CD4-positive, alpha-beta memory T cell (primary cell): ENCODE measurements at regions of chr10 and their contacts with region 1.

Region 1: DNA sequence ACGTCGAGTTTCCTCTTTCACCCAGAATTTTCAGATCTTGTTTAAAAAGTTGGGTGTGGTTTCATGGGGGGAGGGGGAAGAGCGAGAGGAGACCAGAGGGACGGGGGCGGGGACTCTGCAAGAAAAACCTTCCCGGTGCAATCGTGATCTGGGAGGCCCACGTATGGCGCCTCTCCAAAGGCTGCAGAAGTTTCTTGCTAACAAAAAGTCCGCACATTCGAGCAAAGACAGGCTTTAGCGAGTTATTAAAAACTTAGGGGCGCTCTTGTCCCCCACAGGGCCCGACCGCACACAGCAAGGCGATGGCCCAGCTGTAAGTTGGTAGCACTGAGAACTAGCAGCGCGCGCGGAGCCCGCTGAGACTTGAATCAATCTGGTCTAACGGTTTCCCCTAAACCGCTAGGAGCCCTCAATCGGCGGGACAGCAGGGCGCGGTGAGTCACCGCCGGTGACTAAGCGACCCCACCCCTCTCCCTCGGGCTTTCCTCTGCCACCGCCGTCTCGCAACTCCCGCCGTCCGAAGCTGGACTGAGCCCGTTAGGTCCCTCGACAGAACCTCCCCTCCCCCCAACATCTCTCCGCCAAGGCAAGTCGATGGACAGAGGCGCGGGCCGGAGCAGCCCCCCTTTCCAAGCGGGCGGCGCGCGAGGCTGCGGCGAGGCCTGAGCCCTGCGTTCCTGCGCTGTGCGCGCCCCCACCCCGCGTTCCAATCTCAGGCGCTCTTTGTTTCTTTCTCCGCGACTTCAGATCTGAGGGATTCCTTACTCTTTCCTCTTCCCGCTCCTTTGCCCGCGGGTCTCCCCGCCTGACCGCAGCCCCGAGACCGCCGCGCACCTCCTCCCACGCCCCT is at the start of gene VIM:
- DNase-seq: peak; percentile 79 to 95 (median 80)
- H3K4me3 ChIP-seq: peak within 1 kb of the TSS; percentile 82 to 91
- H3K4me3 Mint-ChIP-seq: peak within 1 kb of the TSS; percentile 88 to 99 (median 98)
- H3K27ac ChIP-seq: peak within 1 kb of the TSS; percentile 98
- H3K27ac Mint-ChIP-seq: peak within 1 kb of the TSS; percentile 96 to 100 (median 99)
- H3K4me1 ChIP-seq: peaks cover 48% of the 10 kb centered on the region
- H3K4me1 Mint-ChIP-seq: peaks cover 28 to 83% (median 52%) of the 10 kb centered on the region in 4 donors
- H3K27me3 ChIP-seq: no peaks in the 10 kb centered on the region
- H3K27me3 Mint-ChIP-seq: no peaks in the 10 kb centered on the region
- total RNA-seq, gene VIM: 657 to 677 TPM

Region 2: DNA sequence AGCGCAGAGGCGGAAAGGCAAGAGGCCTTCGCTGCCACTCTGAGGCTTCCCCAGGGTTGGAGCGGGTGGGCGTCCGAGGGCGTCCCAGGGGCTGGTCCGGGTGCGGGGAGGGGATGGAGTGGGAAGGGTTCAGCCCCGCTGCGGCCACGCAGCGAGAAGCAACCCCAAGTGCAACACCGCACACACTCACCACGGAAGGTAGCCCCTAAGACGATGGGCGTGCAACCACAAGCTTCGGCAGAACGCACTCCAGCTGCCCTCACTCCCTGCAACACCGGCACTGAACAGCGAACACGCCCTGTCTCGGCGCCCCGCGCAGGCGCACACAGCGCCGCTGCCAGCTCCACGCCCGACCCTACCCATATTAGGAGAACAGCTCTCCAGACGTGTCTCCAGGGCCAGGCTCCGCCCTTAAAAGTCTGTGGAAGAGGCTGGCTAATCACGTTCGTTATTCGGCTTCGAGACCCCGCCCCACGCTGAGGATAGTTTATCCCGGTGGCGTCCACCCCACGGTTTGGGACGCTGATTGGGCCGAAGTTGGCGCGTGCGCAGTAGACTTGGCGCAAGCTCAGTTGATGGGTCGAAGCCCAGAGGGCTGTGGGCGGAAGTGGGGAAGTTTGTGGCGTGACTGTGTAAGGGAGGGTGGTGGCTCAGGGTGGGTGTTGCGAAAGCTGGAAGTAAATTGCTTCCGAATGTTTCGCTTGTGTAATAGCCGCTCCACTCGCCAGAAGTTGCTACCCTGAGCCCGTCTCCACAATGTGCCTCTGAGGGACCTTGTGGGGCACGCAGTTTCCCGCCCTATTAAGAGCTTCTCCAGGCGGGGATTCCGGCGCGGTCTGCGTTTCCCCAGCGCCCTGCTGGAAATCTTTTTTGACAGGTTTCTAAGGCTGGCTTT is 410.9 kb before region 1 on chr10 and contains the start of gene RSU1:
- CTCF ChIA-PET with region 1: interaction called, 6 read pairs
- POLR2A ChIA-PET with region 1: interaction called, 101 read pairs
- intact Hi-C with region 1: loop called (anchors 1 kb)
- DNase-seq: peak; percentile 100
- H3K4me3 ChIP-seq: peak within 1 kb of the TSS; percentile 58 to 70
- H3K4me3 Mint-ChIP-seq: peak within 1 kb of the TSS; percentile 95 to 99 (median 97)
- H3K27ac ChIP-seq: peak within 1 kb of the TSS; percentile 78
- H3K27ac Mint-ChIP-seq: peak within 1 kb of the TSS; percentile 88 to 98 (median 96)
- H3K4me1 ChIP-seq: peaks cover 37% of the 10 kb centered on the region
- H3K4me1 Mint-ChIP-seq: peaks cover 24 to 55% (median 35%) of the 10 kb centered on the region in 4 donors
- H3K27me3 ChIP-seq: no peaks in the 10 kb centered on the region
- H3K27me3 Mint-ChIP-seq: no peaks in the 10 kb centered on the region
- total RNA-seq, gene RSU1: 53.6 to 54.7 TPM

Region 3: GRCh38 chr10:16891375-16892313 is 336.7 kb before region 1 on chr10:
- CTCF ChIA-PET with region 1: no interaction called
- POLR2A ChIA-PET with region 1: no interaction called
- intact Hi-C with region 1: loop called (anchors 1 kb)
- DNase-seq: peak; percentile 20 to 47 (median 37)
- H3K4me3 ChIP-seq: peak overlapping the region in 1 of 2 donors; percentile 11
- H3K4me3 Mint-ChIP-seq: peak overlapping the region; percentile 64 to 84 (median 78)
- H3K27ac ChIP-seq: no peak overlapping the region
- H3K27ac Mint-ChIP-seq: peak overlapping the region in 6 of 7 donors; percentile 18 to 86 (median 61)
- H3K4me1 ChIP-seq: peaks cover 10% of the 10 kb centered on the region
- H3K4me1 Mint-ChIP-seq: peaks cover 6 to 13% (median 9%) of the 10 kb centered on the region in 4 donors
- H3K27me3 ChIP-seq: no peaks in the 10 kb centered on the region
- H3K27me3 Mint-ChIP-seq: no peaks in the 10 kb centered on the region

Region 4: GRCh38 chr10:17029581-17030271 is 198.6 kb before region 1 on chr10:
- CTCF ChIA-PET with region 1: interaction called, 4 read pairs
- POLR2A ChIA-PET with region 1: interaction called, 98 read pairs
- intact Hi-C with region 1: loop called (anchors 1 kb)
- DNase-seq: peak; percentile 65 to 90 (median 68)
- H3K4me3 ChIP-seq: peak overlapping the region in 1 of 2 donors; percentile 51
- H3K4me3 Mint-ChIP-seq: peak overlapping the region; percentile 81 to 86 (median 84)
- H3K27ac ChIP-seq: peak overlapping the region; percentile 90
- H3K27ac Mint-ChIP-seq: peak overlapping the region; percentile 95 to 97 (median 97)
- H3K4me1 ChIP-seq: peaks cover 90% of the 10 kb centered on the region
- H3K4me1 Mint-ChIP-seq: peaks cover 55 to 94% (median 77%) of the 10 kb centered on the region in 4 donors
- H3K27me3 ChIP-seq: no peaks in the 10 kb centered on the region
- H3K27me3 Mint-ChIP-seq: no peaks in the 10 kb centered on the region

Region 5: DNA sequence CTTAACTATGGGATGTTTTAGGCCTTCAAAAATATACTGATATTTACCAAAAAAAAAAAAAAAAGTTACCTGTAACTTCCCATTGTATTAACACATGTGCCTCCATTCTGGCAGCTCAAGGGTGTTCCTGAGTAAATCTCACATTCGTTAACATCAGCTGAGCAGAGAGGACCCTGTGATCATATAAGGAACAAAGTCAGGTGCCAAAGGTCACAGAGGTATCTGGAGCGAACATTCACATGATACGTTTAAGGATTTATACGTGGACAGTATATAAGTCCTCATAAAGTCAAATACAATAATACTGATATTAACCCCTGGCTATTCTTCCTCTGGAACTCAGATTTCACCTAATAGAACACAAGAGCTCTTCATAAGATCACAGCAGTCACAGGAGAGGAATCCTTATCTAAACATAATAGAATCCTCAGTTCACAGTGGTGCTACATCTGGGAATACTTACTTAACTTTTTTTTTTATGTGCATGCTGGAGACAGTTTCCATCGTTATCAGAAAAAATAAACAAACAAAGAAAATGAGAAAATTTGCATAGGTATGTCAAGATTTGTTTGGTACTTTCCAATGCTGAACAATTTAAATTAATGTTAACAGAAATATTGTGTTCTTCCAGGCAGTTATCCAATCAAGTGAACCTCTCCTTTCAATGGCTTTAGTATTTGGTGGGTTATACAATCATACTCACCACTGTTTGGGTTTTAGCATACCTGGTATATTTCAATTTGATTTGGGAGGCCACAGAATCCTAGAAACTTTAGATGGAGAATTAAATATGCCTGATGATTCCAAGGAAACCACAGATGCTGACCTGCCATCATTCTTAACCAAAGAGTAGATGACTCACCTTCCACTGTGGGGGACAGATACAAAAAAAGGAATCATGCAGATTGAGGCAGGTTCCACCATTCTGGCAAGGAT is 105.3 kb before region 1 on chr10:
- CTCF ChIA-PET with region 1: no interaction called
- POLR2A ChIA-PET with region 1: no interaction called
- intact Hi-C with region 1: no loop called
- DNase-seq: no peak
- H3K4me3 ChIP-seq: no peak overlapping the region
- H3K4me3 Mint-ChIP-seq: no peak overlapping the region
- H3K27ac ChIP-seq: no peak overlapping the region
- H3K27ac Mint-ChIP-seq: no peak overlapping the region
- H3K4me1 ChIP-seq: no peaks in the 10 kb centered on the region
- H3K4me1 Mint-ChIP-seq: peaks cover 0 to 3% (median 0%) of the 10 kb centered on the region in 4 donors
- H3K27me3 ChIP-seq: no peaks in the 10 kb centered on the region
- H3K27me3 Mint-ChIP-seq: no peaks in the 10 kb centered on the region

Region 6: DNA sequence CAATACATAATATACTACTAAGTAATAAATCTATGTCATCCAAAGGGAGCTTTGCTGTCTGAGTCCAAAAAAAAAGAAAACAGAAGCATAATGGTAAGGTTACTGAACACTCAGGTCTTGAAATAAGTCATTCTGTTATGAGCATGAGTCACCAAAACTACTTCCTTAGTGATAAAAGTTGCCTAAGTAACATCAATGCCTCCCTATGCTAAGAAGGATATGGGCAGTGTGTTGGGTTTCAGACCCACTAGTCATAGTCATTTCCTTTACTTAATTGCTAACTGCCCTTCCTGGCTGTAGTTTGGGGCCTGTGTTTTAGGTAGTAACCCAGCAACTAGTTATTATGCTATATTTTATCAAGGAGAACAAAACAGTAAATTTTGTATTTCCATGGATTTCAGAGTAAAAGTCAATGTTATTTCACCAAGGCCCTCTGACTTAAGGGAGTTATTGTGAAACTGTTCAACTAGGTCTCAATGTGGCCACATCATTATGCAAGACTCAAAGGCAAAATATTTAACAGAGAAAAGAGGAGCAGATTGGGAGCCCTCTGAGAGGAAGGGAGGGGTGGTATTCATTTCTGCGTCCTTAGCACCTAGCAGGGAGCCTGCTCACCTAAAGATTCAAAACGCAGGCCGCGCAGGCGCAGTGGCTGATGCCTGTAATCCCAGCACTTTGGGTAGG is 12.0 kb before region 1 on chr10:
- CTCF ChIA-PET with region 1: interaction called, 11 read pairs
- POLR2A ChIA-PET with region 1: interaction called, 41 read pairs
- intact Hi-C with region 1: loop called (anchors 1 kb)
- DNase-seq: peak in 4 of 5 donors; percentile 36 to 72 (median 47)
- H3K4me3 ChIP-seq: no peak overlapping the region
- H3K4me3 Mint-ChIP-seq: no peak overlapping the region
- H3K27ac ChIP-seq: peak overlapping the region; percentile 56
- H3K27ac Mint-ChIP-seq: peak overlapping the region; percentile 78 to 93 (median 87)
- H3K4me1 ChIP-seq: peaks cover 17% of the 10 kb centered on the region
- H3K4me1 Mint-ChIP-seq: peaks cover 8 to 39% (median 11%) of the 10 kb centered on the region in 4 donors
- H3K27me3 ChIP-seq: no peaks in the 10 kb centered on the region
- H3K27me3 Mint-ChIP-seq: no peaks in the 10 kb centered on the region

Region 7: DNA sequence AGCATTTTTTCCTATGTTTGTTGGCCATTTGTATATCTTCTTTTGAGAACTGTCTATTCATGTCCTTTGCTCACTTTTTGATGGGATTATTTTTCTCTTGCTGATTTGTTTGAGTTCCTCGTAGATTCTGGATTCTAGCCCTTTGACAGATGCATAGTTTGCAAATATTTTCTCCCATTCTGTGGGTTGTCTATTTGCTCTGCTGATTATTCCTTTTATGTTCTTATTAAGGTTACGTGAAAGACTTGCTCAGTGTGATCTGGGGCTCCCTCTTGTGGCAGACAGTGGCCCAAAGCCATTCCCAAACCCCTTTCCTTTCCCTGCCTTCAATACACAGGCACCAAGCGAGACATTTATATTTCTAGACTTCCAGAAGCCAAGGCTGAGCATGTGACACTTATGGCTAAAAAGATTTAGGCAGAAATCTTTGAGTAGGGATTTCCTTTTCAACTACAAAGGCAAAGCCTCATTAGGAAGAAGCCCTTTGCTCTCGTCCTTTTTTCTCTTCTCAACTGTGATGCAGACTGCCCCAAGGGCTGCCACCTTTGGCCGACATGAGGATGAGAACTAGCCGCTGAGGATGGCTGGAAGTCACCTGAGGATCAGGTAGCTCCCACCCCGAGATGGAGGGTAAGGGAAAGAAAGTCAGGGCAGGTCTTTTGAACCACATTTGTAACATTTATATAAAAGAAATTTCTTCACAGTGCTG is 202.5 kb after region 1 on chr10:
- CTCF ChIA-PET with region 1: interaction called, 6 read pairs
- POLR2A ChIA-PET with region 1: interaction called, 27 read pairs
- intact Hi-C with region 1: loop called (anchors 2 kb)
- DNase-seq: peak; percentile 54 to 68 (median 63)
- H3K4me3 ChIP-seq: no peak overlapping the region
- H3K4me3 Mint-ChIP-seq: peak overlapping the region in 6 of 8 donors; percentile 39 to 79 (median 66)
- H3K27ac ChIP-seq: no peak overlapping the region
- H3K27ac Mint-ChIP-seq: peak overlapping the region; percentile 24 to 95 (median 50)
- H3K4me1 ChIP-seq: peaks cover 52% of the 10 kb centered on the region
- H3K4me1 Mint-ChIP-seq: peaks cover 45 to 53% (median 50%) of the 10 kb centered on the region in 4 donors
- H3K27me3 ChIP-seq: no peaks in the 10 kb centered on the region
- H3K27me3 Mint-ChIP-seq: peaks cover 0 to 1% of the 10 kb centered on the region in 2 donors

Region 8: GRCh38 chr10:18659120-18659818 is 1431.0 kb after region 1 on chr10 and contains the start of gene ARL5B:
- CTCF ChIA-PET with region 1: no interaction called
- POLR2A ChIA-PET with region 1: no interaction called
- intact Hi-C with region 1: loop called (anchors 2 kb)
- DNase-seq: peak; percentile 93 to 98 (median 94)
- H3K4me3 ChIP-seq: peak within 1 kb of the TSS; percentile 85 to 99
- H3K4me3 Mint-ChIP-seq: peak within 1 kb of the TSS; percentile 99 to 100 (median 100)
- H3K27ac ChIP-seq: peak within 1 kb of the TSS; percentile 94
- H3K27ac Mint-ChIP-seq: peak within 1 kb of the TSS; percentile 96 to 100 (median 99)
- H3K4me1 ChIP-seq: peaks cover 36% of the 10 kb centered on the region
- H3K4me1 Mint-ChIP-seq: peaks cover 26 to 54% (median 40%) of the 10 kb centered on the region in 4 donors
- H3K27me3 ChIP-seq: no peaks in the 10 kb centered on the region
- H3K27me3 Mint-ChIP-seq: no peaks in the 10 kb centered on the region
- total RNA-seq, gene ARL5B: 13.1 to 14.1 TPM